Activated CD4-positive, alpha-beta T cell treated with anti-CD3 and anti-CD28 coated beads for 36 hours (primary cell): ENCODE measurements at regions of chr22 and their contacts with region 1.

Region 1: DNA sequence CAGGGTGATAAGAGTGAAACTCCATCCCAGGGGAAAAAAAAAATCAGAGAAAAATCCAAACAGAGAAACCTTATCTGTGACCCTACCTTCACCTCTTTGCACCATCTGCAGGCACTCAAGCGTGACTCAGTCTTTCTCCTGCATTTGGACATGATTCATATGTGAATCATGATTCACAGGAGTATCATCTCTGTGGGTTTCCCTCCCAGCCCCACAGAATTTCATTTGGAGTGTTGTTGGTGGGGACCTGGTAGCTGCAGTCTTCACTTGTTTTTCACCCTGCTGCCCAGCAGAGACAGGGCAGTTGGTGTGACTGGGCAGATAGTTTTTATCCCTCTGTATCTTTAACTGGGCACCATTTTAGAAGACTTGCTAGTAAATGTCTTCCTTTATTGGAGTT is 75.7 kb downstream of the DEPDC5 start:
- DNase-seq: peak; percentile 76
- ATAC-seq: peak; percentile 98
- H3K4me3 Mint-ChIP-seq: peak overlapping the region; percentile 4
- H3K27ac Mint-ChIP-seq: peak overlapping the region; percentile 88
- H3K4me1 Mint-ChIP-seq: peaks cover 31% of the 10 kb centered on the region
- H3K27me3 Mint-ChIP-seq: no peaks in the 10 kb centered on the region

Region 2: DNA sequence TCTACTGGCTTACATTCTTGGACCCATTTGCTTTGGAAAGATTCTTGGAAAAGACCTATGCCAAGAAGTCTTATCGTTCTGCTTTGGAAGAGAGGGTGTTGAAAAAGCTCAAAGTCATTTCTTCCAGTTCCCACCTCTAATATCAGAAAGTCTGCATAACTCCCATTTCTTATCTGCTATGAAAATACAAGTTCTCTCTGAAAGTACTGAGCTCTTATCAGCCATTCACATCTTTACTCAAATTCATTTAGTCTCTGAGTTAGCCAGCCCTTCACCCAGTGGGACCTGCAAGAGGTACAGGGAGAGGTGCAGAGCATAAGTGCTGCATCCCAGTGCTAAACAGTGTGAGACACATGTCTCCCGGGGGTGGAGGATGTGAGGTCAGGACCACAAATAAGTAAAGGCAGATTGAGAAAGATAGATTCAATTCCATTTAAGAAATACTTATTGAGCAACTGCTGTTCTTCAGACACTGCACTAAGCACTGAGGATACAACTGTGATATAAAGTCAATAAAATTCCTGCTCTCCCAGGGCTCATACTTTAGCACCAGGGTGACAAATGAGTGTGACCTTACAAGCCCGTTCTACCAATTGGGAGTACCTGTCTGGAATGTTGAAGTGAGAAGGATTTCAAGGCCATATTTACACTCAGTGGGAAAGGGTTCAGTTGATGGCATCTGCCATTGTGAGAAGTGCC is 244.2 kb before region 1 on chr22:
- CTCF ChIA-PET with region 1: no interaction called
- POLR2A ChIA-PET with region 1: no interaction called
- intact Hi-C with region 1: loop called in 1 of 2 experiments (anchors 5 kb)
- DNase-seq: peak; percentile 35
- ATAC-seq: peak; percentile 47
- H3K4me3 Mint-ChIP-seq: no peak overlapping the region
- H3K27ac Mint-ChIP-seq: peak overlapping the region; percentile 64
- H3K4me1 Mint-ChIP-seq: peaks cover 53% of the 10 kb centered on the region
- H3K27me3 Mint-ChIP-seq: no peaks in the 10 kb centered on the region

Region 3: GRCh38 chr22:31818481-31819392 is 10.8 kb before region 1 on chr22:
- CTCF ChIA-PET with region 1: interaction called, 4 read pairs
- POLR2A ChIA-PET with region 1: interaction called, 5 read pairs
- intact Hi-C with region 1: loop called in 1 of 2 experiments (anchors 1 kb)
- DNase-seq: peak; percentile 59
- ATAC-seq: peak; percentile 88
- H3K4me3 Mint-ChIP-seq: no peak overlapping the region
- H3K27ac Mint-ChIP-seq: peak overlapping the region; percentile 33
- H3K4me1 Mint-ChIP-seq: peaks cover 13% of the 10 kb centered on the region
- H3K27me3 Mint-ChIP-seq: no peaks in the 10 kb centered on the region

Region 4: GRCh38 chr22:31846161-31847115 is 16.9 kb after region 1 on chr22:
- CTCF ChIA-PET with region 1: interaction called, 3 read pairs
- POLR2A ChIA-PET with region 1: no interaction called
- intact Hi-C with region 1: loop called in 1 of 2 experiments (anchors 1 kb)
- DNase-seq: peak; percentile 32
- ATAC-seq: peak; percentile 51
- H3K4me3 Mint-ChIP-seq: no peak overlapping the region
- H3K27ac Mint-ChIP-seq: peak overlapping the region; percentile 2
- H3K4me1 Mint-ChIP-seq: peaks cover 9% of the 10 kb centered on the region
- H3K27me3 Mint-ChIP-seq: no peaks in the 10 kb centered on the region

Region 5: DNA sequence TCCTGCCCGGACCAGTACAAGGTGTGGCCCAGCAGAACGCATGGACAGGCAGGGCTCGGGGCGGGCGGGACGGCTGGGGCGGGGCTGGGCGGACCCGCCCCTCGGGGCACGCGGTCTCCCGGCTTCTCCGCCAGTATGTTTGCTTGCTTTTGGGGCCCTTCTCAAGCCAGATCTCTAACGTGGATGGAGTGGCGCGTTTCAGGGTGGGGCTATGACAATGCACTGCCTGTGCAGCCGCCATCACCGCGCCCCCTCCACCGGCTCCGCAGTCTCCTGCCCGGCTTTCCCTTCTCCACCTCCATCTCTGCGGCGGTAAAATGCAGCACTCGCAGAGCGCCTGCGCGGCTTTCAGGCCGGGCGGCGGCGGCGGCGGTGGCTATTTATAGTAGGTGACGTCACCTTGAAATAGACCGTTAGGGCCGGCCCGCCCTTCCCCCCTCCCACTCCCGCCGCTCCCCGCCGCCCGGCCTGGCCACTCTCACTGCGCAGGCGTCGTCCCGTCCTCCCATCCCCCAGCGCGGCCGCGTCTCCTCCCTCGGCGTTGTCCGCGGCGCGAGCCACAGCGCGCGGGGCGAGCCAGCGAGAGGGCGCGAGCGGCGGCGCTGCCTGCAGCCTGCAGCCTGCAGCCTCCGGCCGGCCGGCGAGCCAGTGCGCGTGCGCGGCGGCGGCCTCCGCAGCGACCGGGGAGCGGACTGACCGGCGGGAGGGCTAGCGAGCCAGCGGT is 114.6 kb after region 1 on chr22 and contains the start of gene YWHAH:
- CTCF ChIA-PET with region 1: no interaction called
- POLR2A ChIA-PET with region 1: no interaction called
- intact Hi-C with region 1: loop called in 1 of 2 experiments (anchors 2 kb)
- DNase-seq: peak; percentile 96
- ATAC-seq: peak; percentile 73
- H3K4me3 Mint-ChIP-seq: no peak within 1 kb of the TSS
- H3K27ac Mint-ChIP-seq: peak within 1 kb of the TSS; percentile 84
- H3K4me1 Mint-ChIP-seq: peaks cover 21% of the 10 kb centered on the region
- H3K27me3 Mint-ChIP-seq: no peaks in the 10 kb centered on the region
- total RNA-seq, gene YWHAH: 83.2 to 98.5 TPM

Region 6: DNA sequence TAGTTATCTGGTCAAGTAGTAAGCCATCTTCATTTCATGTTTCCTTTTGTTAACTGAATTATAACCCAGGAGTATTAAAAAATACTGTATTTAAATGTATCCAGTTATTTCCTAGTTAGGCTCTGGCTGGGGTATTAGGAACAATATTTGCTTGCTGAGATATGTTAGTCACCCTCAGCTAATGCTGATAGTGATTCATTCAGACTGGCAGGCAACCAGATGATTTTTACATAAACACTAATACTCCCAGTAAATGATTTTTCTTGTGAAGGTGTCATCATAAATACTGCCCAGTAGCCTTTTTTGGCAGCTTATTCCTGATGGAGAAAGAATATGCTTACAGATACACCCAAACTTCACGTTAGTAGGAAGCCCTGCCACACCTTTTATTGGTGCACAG is 123.0 kb after region 1 on chr22:
- CTCF ChIA-PET with region 1: interaction called, 3 read pairs
- POLR2A ChIA-PET with region 1: no interaction called
- intact Hi-C with region 1: loop called (anchors 1 to 2 kb)
- DNase-seq: no peak
- ATAC-seq: no peak
- H3K4me3 Mint-ChIP-seq: no peak overlapping the region
- H3K27ac Mint-ChIP-seq: no peak overlapping the region
- H3K4me1 Mint-ChIP-seq: peaks cover 67% of the 10 kb centered on the region
- H3K27me3 Mint-ChIP-seq: no peaks in the 10 kb centered on the region

Region 7: DNA sequence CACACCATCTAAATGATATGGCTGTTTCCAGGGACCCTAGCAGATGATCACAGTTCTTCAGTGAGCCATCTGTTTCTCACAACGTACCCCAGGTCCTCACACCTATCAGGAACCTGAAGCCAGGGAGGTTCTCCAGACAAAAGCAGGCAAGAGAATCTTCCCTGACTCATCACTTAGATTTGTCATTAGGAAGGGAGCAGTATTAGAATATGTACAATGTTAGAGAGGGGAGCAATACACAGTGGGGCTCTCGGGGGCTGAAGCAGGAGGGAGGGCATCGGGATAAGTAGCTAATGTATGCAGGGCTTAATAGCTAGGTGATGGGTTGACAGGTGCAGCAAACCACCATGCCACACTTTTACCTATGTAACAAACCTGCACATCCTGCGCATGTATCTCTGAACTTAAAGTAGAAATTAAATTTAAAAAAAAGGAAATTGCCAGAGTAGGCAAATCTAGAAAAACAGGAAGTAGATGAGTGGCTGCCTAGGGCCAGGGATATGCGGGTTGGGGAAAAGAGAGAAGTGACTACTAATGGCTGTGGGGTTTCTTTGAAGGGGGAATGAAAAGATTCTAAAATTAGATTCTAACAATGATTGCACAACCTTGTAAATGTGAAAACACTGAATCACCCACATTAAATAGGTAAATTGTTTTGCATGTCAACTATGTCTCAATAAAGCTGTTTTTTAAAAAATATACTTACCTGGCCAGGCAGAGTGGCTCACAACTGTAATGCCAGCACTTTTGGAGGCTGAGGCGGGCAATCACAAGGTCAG is 315.2 kb after region 1 on chr22:
- CTCF ChIA-PET with region 1: no interaction called
- POLR2A ChIA-PET with region 1: no interaction called
- intact Hi-C with region 1: loop called in 1 of 2 experiments (anchors 5 kb)
- DNase-seq: no peak
- ATAC-seq: peak; percentile 7
- H3K4me3 Mint-ChIP-seq: no peak overlapping the region
- H3K27ac Mint-ChIP-seq: no peak overlapping the region
- H3K4me1 Mint-ChIP-seq: peaks cover 38% of the 10 kb centered on the region
- H3K27me3 Mint-ChIP-seq: no peaks in the 10 kb centered on the region